AG04449 (cell line): ENCODE measurements at regions of chr16 and their contacts with region 1.

Region 1: GRCh38 chr16:66344533-66345145 is 21.9 kb upstream of the CDH5 start:
- DNase-seq: no peak
- H3K4me3 ChIP-seq: no peak overlapping the region
- CTCF ChIP-seq: peak; percentile 50

Region 2: GRCh38 chr16:66223176-66223780 is 121.4 kb before region 1 on chr16:
- CTCF ChIA-PET with region 1: no interaction called
- POLR2A ChIA-PET with region 1: no interaction called
- DNase-seq: peak; percentile 23
- H3K4me3 ChIP-seq: no peak overlapping the region
- CTCF ChIP-seq: no peak

Region 3: DNA sequence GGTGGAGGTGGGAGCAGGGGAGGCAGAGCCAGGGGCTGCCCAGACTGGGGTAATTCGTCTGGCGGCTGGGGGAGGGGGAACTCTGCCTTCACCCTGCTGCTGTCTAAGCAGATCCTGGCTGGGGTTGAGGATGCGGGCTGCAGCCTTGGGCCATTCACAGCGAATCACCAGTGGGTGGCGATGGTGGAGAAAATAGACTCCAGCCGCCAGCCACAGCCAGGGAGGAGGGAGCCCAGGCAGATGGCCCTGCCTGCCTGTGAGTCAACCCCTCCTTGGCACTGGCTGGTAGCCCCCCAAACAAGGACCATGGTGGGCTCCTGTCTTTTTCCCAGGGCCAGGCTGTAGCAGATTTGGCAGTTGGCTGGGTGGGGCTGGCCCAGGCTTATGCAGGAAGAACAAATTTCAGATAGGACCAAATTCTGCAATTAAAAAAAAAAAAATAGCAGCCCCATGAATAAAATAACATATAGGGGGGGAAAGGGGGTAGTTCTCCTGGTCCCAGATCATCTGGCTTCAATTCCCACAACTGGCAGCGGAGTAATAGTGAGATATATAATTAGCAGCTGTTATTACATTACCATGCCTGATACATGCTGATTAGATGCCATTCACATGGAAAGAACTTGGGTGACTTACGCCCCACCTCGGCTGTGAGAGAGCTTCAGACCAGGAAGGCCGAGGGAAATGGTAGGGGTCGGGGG is 19.7 kb before region 1 on chr16:
- CTCF ChIA-PET with region 1: interaction called, 39 read pairs
- POLR2A ChIA-PET with region 1: no interaction called
- DNase-seq: no peak
- H3K4me3 ChIP-seq: no peak overlapping the region
- CTCF ChIP-seq: peak; percentile 11

Region 4: GRCh38 chr16:66364117-66364967 is 19.7 kb after region 1 on chr16:
- CTCF ChIA-PET with region 1: interaction called, 218 read pairs
- POLR2A ChIA-PET with region 1: no interaction called
- DNase-seq: no peak
- H3K4me3 ChIP-seq: no peak overlapping the region
- CTCF ChIP-seq: no peak